Aorta (tissue), 5 donors: ENCODE measurements at regions of chr4 and their contacts with region 1.

Region 1: GRCh38 chr4:99405433-99406115 is 29.6 kb downstream of the ADH7 start:
- DNase-seq: peak in 1 of 2 donors; percentile 65
- ATAC-seq: peak; percentile 90
- H3K4me3 ChIP-seq: no peak overlapping the region
- H3K27ac ChIP-seq: peak overlapping the region in 1 of 2 donors; percentile 92
- H3K4me1 ChIP-seq: peaks cover 0 to 3% of the 10 kb centered on the region in 2 donors
- H3K27me3 ChIP-seq: no peaks in the 10 kb centered on the region

Region 2: DNA sequence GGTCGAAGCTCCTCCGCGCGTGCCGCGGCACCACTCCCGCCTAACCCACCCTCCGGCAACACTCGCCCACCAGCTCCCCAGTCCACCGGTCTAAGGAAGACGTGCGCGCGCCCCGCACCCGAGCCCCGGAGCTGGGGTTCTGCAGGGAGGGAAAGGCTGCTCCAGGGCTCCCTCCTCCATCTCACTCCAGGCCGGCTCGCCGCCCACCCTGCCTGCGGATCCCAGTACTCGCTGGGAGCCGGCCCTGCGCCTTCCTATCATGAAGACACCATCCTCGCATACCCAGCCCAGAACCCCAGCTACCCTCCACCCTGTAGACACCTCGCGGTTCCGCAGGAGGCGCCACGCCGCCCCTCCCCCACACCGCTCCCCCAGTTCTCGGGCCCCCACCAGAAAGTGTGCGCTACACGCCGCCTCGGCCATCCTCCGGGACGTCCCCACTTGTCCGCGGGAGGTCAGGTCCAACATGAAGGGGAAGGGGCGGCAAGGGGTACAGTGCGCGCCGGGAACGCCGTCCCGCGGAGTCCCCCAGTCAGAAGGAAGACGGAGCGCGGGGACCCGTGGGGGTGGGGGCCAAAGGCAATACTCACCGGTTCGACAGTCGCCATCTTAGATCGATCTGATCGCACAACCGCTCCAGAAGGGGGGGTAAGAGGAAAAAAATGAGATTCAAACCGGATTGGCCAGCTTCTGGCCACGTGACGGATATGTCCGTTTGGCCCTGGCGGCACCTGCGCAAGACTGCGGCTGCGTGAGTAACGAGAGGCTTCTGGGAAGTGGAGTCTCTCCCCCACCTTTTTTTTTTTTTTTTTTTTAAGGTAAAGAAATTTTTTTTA is 476.9 kb before region 1 on chr4 and contains the start of gene EIF4E:
- intact Hi-C with region 1: loop called in 1 of 2 experiments (anchors 5 kb)
- DNase-seq: peak; percentile 98 to 99
- ATAC-seq: peak; percentile 98
- H3K4me3 ChIP-seq: peak within 1 kb of the TSS; percentile 72 to 84
- H3K27ac ChIP-seq: peak within 1 kb of the TSS; percentile 34 to 97
- H3K4me1 ChIP-seq: no peaks in the 10 kb centered on the region
- H3K27me3 ChIP-seq: no peaks in the 10 kb centered on the region
- total RNA-seq, gene EIF4E: 60.3 to 72.8 TPM

Region 3: DNA sequence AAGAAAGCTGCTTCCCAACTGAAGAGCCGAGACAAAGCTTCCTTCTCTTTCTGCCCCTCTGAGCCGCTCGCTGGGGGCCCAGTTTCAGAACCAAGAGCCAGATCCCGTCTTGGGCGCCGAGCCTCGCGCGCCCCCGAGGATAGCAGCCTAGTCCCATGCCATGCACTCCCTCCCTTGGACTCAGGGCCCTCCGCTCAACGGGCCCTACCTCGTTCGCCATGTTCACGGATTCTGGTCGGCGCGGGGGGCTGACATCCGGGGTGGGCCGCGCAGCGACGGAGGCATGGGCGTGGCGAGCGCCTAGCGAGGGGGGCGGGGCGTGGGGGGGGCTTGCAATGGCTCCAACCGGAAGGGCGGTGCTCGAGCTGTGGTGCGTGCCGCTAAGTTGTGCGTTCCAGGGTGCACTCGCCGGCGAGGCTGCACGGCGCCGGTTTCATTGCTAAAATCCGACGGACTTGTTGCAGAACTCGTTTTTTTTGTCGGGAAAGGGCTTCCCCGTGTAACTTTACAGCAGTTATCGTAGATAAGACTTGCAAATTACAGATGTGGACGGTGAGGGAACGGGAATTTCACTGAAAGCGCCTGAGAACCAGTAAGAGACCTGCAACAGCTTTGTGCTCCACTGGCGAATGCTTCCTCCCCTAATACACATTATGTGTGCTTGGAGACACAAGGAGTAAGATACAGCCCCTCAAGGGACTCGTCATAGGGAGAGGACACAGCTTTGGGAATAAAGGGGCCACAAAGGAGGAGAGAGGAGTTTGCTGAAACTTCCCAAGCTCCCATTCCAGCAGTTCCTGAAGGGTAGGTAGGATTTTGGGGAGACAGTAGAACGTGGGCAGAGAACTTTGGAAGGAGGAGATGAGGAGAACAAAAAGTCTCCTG is 316.9 kb before region 1 on chr4 and contains the start of gene ADH5:
- intact Hi-C with region 1: loop called in 1 of 2 experiments (anchors 10 kb)
- DNase-seq: peak; percentile 93 to 97
- ATAC-seq: peak; percentile 97
- H3K4me3 ChIP-seq: peak within 1 kb of the TSS; percentile 94 to 97
- H3K27ac ChIP-seq: peak within 1 kb of the TSS; percentile 95 to 98
- H3K4me1 ChIP-seq: no peaks in the 10 kb centered on the region
- H3K27me3 ChIP-seq: no peaks in the 10 kb centered on the region
- total RNA-seq, gene ADH5: 230 to 231 TPM

Region 4: DNA sequence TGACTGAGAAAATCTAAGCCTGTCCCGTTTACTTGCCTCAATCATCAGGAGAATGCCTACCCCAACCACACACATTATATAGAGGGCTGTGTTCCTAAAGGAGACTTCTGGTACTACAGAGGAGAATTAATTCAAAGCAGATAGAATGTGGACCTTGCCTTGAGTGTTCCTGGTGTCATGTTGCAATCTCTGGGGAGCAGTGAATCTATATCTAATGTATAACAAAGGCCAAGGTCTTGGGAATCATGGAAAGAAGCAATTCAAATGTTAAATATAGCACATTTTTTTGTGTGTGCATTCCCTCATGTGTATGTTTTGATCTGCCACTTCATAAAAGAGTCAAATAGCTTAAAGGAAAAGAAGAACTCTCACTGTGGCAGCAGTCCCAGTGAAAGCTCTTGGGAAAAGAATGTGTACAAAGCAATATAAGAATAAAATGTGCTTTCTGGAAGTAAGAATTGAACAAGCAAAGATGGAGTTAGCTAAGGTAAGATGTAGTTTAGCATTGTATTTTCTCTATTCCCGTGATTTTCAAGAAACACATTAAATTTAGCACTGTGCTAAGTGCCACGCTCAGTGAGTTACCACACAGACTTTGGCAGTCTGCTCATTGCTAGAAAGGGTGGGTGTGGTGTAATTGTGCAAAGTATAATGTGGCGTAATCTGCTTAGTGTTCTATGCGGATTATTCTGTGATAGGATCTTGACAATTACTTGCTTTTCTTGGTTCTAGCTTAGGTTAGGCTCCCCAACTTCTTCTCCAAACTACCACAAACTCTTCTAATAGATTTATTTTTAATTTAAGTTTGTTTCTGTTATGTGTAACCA is 200.2 kb before region 1 on chr4:
- intact Hi-C with region 1: loop called (anchors 2 kb)
- DNase-seq: no peak
- ATAC-seq: peak; percentile 67
- H3K4me3 ChIP-seq: no peak overlapping the region
- H3K27ac ChIP-seq: peak overlapping the region; percentile 57 to 71
- H3K4me1 ChIP-seq: peaks cover 2 to 4% of the 10 kb centered on the region in 2 donors
- H3K27me3 ChIP-seq: no peaks in the 10 kb centered on the region

Region 5: GRCh38 chr4:99362768-99363167 is 42.8 kb before region 1 on chr4:
- intact Hi-C with region 1: no loop called
- DNase-seq: no peak
- ATAC-seq: peak; percentile 36
- H3K4me3 ChIP-seq: no peak overlapping the region
- H3K27ac ChIP-seq: peak overlapping the region in 1 of 2 donors; percentile 76
- H3K4me1 ChIP-seq: peaks cover 0 to 1% of the 10 kb centered on the region in 2 donors
- H3K27me3 ChIP-seq: no peaks in the 10 kb centered on the region

Region 6: DNA sequence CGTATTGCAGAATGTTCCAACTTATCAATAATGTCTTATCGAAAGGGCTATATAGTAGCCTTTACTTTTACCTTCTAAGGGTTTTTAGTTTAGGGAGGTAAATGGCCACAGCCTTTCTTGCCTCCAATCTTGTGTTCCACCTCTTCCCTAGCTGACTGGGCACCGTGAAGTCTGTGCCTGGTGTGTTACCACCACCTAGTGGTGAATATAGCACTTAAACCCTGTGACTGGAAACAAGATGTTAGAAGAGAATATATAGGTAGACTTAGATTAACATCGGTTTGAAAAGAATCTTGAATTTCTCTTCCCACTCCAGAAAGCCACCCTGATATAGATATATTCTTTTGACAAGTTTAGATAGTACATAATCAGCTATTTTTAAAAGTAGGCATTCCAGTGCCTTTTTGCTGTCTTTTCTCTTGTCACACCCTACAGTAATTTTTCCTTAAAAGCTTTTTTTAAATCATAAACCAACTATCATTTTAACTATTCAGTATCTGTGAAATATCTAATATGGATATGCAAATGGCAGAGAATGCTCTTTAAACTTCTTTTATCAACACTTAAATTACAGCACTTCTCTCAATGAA is 57.4 kb after region 1 on chr4:
- intact Hi-C with region 1: loop called (anchors 2 to 5 kb)
- DNase-seq: peak in 1 of 2 donors; percentile 59
- ATAC-seq: peak; percentile 90
- H3K4me3 ChIP-seq: no peak overlapping the region
- H3K27ac ChIP-seq: no peak overlapping the region
- H3K4me1 ChIP-seq: no peaks in the 10 kb centered on the region
- H3K27me3 ChIP-seq: no peaks in the 10 kb centered on the region